Aorta (tissue), 5 donors: ENCODE measurements at regions of chr12 and their contacts with region 1.

Region 1: DNA sequence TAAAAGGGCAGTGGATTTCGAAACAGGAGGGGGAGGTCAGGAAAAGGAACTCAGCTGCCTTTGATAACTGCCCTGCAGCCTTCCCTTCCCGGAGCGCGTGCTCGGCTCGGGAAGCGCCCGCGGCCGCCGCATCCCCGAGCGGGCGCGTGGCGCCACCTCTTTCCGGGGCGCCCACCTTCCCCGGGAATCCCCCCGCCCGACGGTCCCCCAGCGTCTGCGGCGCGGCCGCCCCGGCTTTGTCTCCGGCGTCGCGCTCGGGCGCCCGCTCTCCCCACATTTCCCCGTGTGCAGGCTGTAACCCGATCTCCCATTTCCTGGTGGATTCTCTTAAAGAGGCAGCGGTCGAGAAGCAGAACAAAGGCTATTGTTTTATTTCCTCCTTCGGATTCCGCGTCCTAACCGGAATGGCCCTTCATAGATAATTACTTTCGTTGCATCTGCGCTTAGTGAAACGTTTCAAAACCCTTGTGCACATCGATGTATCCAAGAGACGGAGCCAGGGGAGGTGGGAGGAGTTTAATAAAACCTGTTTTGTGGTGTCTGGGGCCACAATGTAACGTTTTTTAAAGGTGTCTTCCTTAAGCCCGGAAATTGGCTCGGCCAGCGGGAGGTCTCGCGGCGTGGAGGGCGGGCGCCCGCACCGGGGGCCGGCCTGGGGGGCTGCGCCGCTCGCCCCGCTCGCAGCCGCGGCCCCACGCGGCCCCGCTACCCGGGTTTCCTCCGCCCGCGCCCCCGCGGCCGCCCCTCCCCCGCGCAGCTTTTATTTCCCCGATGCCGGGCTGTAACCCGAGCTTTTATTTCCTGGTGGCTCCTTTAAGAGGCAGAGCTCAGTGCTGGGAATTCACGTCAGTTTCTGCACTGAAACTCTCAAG is at the start of gene ETV6:
- DNase-seq: peak; percentile 82 to 88
- ATAC-seq: peak; percentile 68
- H3K4me3 ChIP-seq: peak within 1 kb of the TSS; percentile 100
- H3K27ac ChIP-seq: peak within 1 kb of the TSS; percentile 98 to 100
- H3K4me1 ChIP-seq: peaks cover 0 to 2% of the 10 kb centered on the region in 2 donors
- H3K27me3 ChIP-seq: no peaks in the 10 kb centered on the region
- total RNA-seq, gene ETV6: 73.7 to 113 TPM

Region 2: GRCh38 chr12:11695321-11695720 is 46.3 kb after region 1 on chr12:
- intact Hi-C with region 1: loop called in 1 of 2 experiments (anchors 2 kb)
- DNase-seq: no peak
- ATAC-seq: peak; percentile 58
- H3K4me3 ChIP-seq: no peak overlapping the region
- H3K27ac ChIP-seq: peak overlapping the region; percentile 51 to 56
- H3K4me1 ChIP-seq: peaks cover 6 to 9% of the 10 kb centered on the region in 2 donors
- H3K27me3 ChIP-seq: no peaks in the 10 kb centered on the region

Region 3: GRCh38 chr12:11765817-11766794 is 117.0 kb after region 1 on chr12:
- intact Hi-C with region 1: loop called in 1 of 2 experiments (anchors 5 kb)
- DNase-seq: peak in 1 of 2 donors; percentile 54
- ATAC-seq: peak; percentile 54
- H3K4me3 ChIP-seq: no peak overlapping the region
- H3K27ac ChIP-seq: peak overlapping the region; percentile 32 to 99
- H3K4me1 ChIP-seq: peaks cover 3 to 12% of the 10 kb centered on the region in 2 donors
- H3K27me3 ChIP-seq: no peaks in the 10 kb centered on the region

Region 4: GRCh38 chr12:11885261-11886038 is 236.4 kb after region 1 on chr12:
- intact Hi-C with region 1: loop called (anchors 10 kb)
- DNase-seq: no peak
- ATAC-seq: peak; percentile 53
- H3K4me3 ChIP-seq: no peak overlapping the region
- H3K27ac ChIP-seq: no peak overlapping the region
- H3K4me1 ChIP-seq: no peaks in the 10 kb centered on the region
- H3K27me3 ChIP-seq: no peaks in the 10 kb centered on the region

Region 5: GRCh38 chr12:12032851-12033588 is 384.0 kb after region 1 on chr12:
- intact Hi-C with region 1: loop called (anchors 2 to 5 kb)
- DNase-seq: peak; percentile 84 to 88
- ATAC-seq: peak; percentile 89
- H3K4me3 ChIP-seq: peak overlapping the region; percentile 27 to 94
- H3K27ac ChIP-seq: peak overlapping the region; percentile 20 to 53
- H3K4me1 ChIP-seq: no peaks in the 10 kb centered on the region
- H3K27me3 ChIP-seq: no peaks in the 10 kb centered on the region